WTC11 (cell line): ENCODE measurements at regions of chr6 and their contacts with region 1.

Region 1: DNA sequence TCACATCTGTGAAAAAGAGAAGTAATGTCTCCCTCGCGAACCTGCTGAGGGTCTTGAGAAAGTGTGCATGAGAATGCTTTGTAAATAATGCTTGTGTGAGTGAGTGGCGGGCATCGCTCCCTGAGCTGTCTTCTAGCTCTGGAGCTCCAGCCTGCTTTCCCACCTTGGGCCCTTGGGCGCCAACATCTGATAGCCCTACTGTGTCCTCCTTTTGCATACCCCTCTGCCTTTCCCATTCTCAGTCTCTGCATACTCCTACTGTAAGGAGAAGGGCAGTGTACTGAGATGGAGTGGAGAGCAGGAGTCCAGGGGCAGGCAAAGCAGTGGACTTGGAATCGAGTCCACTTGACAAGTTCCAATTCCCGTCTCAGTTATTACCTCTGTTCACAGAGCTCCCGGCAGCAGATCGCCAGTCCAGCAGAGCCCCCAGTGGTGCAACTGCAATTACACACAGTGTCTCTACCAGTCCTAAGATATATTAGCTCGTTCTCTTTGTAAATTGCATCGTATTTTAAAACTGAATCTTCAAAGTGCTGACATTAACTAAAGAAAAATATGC is 847 bp upstream of the NCR2 start:
- DNase-seq: no peak
- ATAC-seq: peak; percentile 36; the same call in 1 of the 2 replicates
- H3K4me3 Mint-ChIP-seq: no peak overlapping the region
- H3K27ac Mint-ChIP-seq: no peak overlapping the region
- H3K4me1 Mint-ChIP-seq: 0 out of 2 replicates have a peak, but pooled peaks cover 3% of the 10 kb centered on the region
- H3K27me3 Mint-ChIP-seq: peaks cover 7% of the 10 kb centered on the region; the same call in 1 of the 2 replicates
- CTCF ChIP-seq: no peak

Region 2: GRCh38 chr6:41306187-41306854 is 28.2 kb before region 1 on chr6:
- CTCF ChIA-PET with region 1: interaction called, 12 read pairs
- POLR2A ChIA-PET with region 1: no interaction called
- DNase-seq: peak; percentile 53
- ATAC-seq: peak; percentile 71
- H3K4me3 Mint-ChIP-seq: no peak overlapping the region
- H3K27ac Mint-ChIP-seq: no peak overlapping the region
- H3K4me1 Mint-ChIP-seq: peaks cover 15% of the 10 kb centered on the region
- H3K27me3 Mint-ChIP-seq: peaks cover 6% of the 10 kb centered on the region; the same call in 1 of the 2 replicates
- CTCF ChIP-seq: peak; percentile 69